ENCODE measurements at regions of chr6 and their contacts with region 1.

Region 1: GRCh38 chr6:157550114-157550989 is 169.4 kb downstream of the ZDHHC14 start:
- DNase-seq: peak; percentile 66
- H3K4me3 Mint-ChIP-seq: no peak overlapping the region
- H3K27ac Mint-ChIP-seq: no peak overlapping the region
- H3K4me1 Mint-ChIP-seq: peaks cover 19% of the 10 kb centered on the region
- H3K27me3 Mint-ChIP-seq: peaks cover 3% of the 10 kb centered on the region

Region 2: DNA sequence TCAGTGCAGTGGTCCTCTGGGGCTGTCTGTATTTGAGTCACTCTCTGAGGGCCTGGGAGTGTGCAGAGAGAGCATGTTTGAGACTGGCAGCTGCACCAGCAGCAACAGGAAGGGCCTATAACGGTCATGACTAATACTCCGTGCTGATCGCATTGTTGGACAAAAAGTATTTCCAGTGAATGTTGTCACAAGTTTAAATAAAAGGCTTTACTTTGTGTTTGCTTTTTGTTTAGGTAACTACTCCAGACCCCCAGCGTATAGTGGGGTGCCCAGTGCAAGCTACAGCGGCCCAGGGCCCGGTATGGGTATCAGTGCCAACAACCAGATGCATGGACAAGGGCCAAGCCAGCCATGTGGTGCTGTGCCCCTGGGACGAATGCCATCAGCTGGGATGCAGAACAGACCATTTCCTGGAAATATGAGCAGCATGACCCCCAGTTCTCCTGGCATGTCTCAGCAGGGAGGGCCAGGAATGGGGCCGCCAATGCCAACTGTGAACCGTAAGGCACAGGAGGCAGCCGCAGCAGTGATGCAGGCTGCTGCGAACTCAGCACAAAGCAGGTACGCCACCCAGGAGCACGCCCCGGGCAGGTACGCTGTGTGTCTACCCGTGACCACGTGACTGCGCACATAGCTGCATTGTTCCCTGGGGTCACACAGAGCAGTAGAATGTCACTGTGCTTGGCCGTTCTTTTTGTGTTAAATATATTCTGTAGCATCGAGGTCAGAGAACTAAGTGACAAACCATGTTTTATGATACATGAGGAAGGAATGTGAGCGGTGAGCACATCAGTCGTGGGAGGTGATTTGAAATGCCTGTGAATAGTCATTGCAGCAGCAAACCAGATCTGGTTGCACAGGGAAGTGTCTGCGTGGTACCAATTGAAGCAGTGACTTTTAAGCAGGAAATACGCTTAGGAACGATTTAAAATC is 401.7 kb before region 1 on chr6:
- CTCF ChIA-PET with region 1: no interaction called
- intact Hi-C with region 1: no loop called
- DNase-seq: no peak
- H3K4me3 Mint-ChIP-seq: no peak overlapping the region
- H3K27ac Mint-ChIP-seq: no peak overlapping the region
- H3K4me1 Mint-ChIP-seq: peaks cover 5% of the 10 kb centered on the region
- H3K27me3 Mint-ChIP-seq: no peaks in the 10 kb centered on the region

Region 3: DNA sequence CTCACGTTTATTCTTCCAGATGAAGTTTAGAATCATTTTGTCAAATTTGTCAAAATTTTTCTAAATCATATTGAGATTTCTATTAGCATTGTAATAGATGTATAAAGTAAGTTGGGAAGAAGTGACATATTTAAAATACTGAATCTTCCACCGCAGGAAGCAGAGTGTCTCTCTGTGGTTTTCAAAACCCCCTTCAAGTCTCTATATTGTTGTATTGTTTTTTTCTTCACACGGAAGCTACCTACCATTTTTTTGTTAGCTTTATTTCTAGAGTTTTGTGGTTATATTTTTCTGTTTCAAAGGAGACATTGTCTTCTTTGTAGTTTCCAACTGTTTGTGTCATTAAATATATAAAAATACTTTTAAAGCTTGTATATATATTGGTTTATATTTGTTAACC is 19.2 kb after region 1 on chr6:
- CTCF ChIA-PET with region 1: no interaction called
- intact Hi-C with region 1: loop called (anchors 1 kb)
- DNase-seq: peak; percentile 18
- H3K4me3 Mint-ChIP-seq: no peak overlapping the region
- H3K27ac Mint-ChIP-seq: no peak overlapping the region
- H3K4me1 Mint-ChIP-seq: peaks cover 18% of the 10 kb centered on the region
- H3K27me3 Mint-ChIP-seq: no peaks in the 10 kb centered on the region

Region 4: GRCh38 chr6:158122048-158122447 is 571.7 kb after region 1 on chr6:
- CTCF ChIA-PET with region 1: no interaction called
- intact Hi-C with region 1: no loop called
- DNase-seq: no peak
- H3K4me3 Mint-ChIP-seq: no peak overlapping the region
- H3K27ac Mint-ChIP-seq: no peak overlapping the region
- H3K4me1 Mint-ChIP-seq: no peaks in the 10 kb centered on the region
- H3K27me3 Mint-ChIP-seq: no peaks in the 10 kb centered on the region

Measured in activated naive CD4-positive, alpha-beta T cell treated with anti-CD3 and anti-CD28 coated beads for 36 hours (primary cell).